ENCODE measurements at regions of chr19 and their contacts with region 1.

Region 1: DNA sequence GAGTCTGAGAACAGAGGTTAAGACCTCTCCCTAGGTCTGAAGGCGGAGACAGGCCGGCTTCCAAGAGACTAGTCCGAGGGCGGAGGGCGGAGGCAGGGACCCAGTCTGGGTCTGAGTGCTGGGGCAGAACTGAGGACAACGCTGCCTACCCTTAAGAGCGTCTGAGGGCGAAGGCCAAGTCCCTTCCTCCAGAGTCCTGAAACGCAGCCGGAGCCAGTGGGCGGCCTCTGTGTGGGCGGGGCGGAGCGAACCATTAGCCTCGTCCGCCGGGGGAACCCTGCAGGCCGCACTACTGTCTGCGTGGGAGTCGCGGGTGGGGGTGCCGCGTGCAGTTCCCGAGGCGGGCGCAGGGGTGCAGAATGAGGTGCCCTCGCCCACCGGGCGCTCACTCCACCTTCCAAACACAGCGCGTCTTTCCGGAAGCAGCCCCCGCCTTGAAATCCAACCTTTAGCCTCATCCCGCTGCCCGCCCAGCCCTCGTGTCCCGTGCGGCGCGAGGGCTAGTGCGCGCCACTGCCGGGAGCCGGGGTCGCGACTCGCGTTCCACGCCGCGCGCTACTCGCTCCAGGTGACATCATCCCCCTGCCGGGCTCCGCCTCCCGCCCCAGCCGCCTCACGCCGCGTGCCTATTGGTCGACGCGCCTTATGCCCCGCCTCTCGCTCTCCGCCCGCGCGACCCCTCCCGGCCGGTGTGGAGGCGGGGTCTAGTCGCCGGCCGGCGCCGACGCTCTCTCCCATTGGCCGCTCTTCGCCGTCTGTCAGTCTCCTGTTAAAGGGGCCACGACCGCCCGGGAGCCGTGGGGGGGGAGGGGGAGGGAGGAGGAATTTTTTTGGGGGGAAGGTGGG is at the start of gene C19orf73:
- DNase-seq: peak; percentile 80 to 96
- H3K4me3 ChIP-seq: peak within 1 kb of the TSS; percentile 74
- H3K27ac ChIP-seq: peak within 1 kb of the TSS; percentile 63
- H3K4me1 ChIP-seq: peaks cover 8% of the 10 kb centered on the region
- H3K27me3 ChIP-seq: peaks cover 13% of the 10 kb centered on the region
- CTCF ChIP-seq: no peak
- total RNA-seq, gene C19orf73: 1.5 and 3.0 TPM in 2 replicates

Region 2: DNA sequence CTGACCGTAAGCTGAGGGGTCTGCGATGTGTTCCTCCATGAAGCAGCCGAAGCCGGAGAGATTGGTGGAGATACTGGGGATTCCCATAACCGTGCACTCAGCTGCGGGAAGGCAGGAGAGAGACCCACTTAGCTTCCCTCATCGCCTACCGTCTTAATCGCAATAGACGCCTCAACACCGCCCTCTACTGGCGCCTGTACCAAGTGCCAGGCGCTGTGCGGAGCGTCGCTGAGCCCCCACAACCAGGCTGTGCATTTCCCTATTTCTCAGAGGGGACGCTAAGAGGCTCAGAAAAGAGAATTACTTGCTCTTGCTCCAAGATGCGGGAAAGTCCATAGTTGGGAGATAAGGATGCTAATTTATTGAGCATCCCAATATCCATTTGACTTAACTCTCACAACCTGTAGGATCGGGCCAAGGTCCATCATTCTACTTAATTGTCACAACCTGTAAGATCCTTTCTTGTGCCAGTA is 147.8 kb before region 1 on chr19:
- CTCF ChIA-PET with region 1: interaction called, 11 read pairs
- POLR2A ChIA-PET with region 1: no interaction called
- intact Hi-C with region 1: no loop called
- DNase-seq: peak; percentile 45 to 64
- H3K4me3 ChIP-seq: no peak overlapping the region
- H3K27ac ChIP-seq: no peak overlapping the region
- H3K4me1 ChIP-seq: peaks cover 12% of the 10 kb centered on the region
- H3K27me3 ChIP-seq: no peaks in the 10 kb centered on the region
- CTCF ChIP-seq: peak; percentile 97

Region 3: DNA sequence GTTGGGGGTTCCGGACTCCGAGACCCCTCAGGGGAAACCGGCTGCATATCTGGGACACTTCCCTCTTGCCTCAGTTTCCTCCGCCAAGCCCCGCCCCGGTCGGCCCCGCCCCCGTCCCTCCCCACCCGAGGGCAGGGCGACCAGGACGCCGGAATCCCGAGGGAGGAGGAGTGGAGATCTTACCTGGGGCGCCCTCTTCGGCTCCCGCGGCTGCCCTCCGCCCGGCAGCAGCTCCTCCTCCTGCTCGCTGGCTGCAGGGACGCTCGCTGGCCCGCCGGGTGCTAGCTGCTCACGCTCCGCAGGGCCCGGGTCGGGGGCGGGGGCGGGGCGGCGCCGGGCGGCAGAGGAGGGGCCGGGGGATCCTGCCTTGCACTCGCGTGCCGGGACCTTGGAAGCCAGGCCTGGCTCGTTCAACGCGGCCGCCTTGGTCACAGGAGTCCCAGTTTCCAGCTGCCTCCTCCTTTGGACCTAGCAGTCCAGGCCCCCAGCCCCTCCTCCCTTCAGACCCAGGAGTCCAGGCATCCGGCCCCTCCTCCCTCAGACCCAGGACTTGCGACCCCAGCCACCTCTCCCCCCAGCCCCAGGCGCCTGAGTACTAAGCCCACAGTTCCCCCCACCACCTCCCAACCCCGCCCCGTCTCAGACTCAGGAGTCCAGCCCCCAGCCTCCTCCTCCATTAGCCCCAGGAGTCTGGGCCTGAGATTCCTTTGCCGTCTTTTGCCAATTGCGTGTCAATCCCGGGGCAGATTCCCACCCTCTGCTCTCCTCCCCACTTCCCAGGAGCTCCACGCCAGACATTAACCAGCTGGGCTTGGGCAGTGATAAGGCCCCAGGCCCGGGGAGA is 53.8 kb before region 1 on chr19 and contains the start of gene NTF4:
- CTCF ChIA-PET with region 1: no interaction called
- POLR2A ChIA-PET with region 1: interaction called, 14 read pairs
- intact Hi-C with region 1: no loop called
- DNase-seq: peak in 1 of 2 experiments; percentile 75
- H3K4me3 ChIP-seq: peak within 1 kb of the TSS; percentile 35; the same call in 1 of the 2 replicates
- H3K27ac ChIP-seq: no peak within 1 kb of the TSS
- H3K4me1 ChIP-seq: peaks cover 11% of the 10 kb centered on the region; the same call in 1 of the 2 replicates
- H3K27me3 ChIP-seq: peaks cover 17% of the 10 kb centered on the region
- CTCF ChIP-seq: no peak
- total RNA-seq, gene NTF4: 14.0 and 18.6 TPM in 2 replicates

Region 4: DNA sequence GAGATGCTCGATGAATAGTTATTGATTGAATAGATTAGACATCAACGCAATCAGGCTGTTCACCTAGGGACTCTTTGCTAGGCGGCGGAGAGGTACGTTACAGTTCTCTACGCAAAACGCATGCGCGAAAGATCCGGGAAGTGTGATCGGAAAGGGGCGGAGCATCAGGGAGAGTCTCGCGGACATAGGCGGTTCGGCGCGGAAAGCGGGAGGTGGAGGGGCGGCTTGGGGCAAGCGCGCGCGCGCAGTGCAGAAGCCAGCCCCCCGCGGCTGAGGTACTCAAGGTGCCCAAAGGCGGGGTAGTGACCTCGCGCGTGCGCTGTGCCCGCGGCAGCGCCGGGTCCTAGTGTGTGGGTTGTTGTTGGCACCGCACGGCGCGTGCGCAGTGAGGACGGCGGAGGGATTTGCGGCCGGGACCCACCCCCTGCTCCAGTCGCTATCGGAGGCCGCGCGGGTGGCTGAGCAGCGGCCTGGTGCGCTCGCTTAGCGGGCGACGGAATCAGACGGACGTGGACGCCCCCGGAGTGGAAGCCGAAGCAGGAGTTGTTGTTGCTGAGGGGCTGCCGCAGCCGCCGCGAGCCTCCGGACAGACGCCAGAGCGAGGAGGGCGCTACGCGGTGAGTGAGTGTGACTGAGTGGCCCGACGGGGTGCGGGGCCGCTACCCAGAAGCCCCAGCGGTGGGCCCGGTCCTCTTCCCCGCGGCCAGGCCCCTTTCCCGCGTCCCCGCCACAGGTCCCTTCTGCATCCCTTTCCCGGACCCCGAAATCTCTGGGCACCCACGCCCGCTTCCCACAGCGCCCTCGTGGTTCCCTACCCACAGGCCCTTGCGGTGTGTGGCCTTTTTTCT is 33.5 kb before region 1 on chr19 and contains the start of gene SNRNP70:
- CTCF ChIA-PET with region 1: no interaction called
- POLR2A ChIA-PET with region 1: interaction called, 15 read pairs
- intact Hi-C with region 1: no loop called
- DNase-seq: peak; percentile 97 to 100
- H3K4me3 ChIP-seq: peak within 1 kb of the TSS; percentile 77
- H3K27ac ChIP-seq: peak within 1 kb of the TSS; percentile 41
- H3K4me1 ChIP-seq: peaks cover 15% of the 10 kb centered on the region
- H3K27me3 ChIP-seq: no peaks in the 10 kb centered on the region
- CTCF ChIP-seq: 0 out of 2 replicates have a peak, but pooled peaks have one; percentile 27
- total RNA-seq, gene SNRNP70: 151 and 199 TPM in 2 replicates

Region 5: DNA sequence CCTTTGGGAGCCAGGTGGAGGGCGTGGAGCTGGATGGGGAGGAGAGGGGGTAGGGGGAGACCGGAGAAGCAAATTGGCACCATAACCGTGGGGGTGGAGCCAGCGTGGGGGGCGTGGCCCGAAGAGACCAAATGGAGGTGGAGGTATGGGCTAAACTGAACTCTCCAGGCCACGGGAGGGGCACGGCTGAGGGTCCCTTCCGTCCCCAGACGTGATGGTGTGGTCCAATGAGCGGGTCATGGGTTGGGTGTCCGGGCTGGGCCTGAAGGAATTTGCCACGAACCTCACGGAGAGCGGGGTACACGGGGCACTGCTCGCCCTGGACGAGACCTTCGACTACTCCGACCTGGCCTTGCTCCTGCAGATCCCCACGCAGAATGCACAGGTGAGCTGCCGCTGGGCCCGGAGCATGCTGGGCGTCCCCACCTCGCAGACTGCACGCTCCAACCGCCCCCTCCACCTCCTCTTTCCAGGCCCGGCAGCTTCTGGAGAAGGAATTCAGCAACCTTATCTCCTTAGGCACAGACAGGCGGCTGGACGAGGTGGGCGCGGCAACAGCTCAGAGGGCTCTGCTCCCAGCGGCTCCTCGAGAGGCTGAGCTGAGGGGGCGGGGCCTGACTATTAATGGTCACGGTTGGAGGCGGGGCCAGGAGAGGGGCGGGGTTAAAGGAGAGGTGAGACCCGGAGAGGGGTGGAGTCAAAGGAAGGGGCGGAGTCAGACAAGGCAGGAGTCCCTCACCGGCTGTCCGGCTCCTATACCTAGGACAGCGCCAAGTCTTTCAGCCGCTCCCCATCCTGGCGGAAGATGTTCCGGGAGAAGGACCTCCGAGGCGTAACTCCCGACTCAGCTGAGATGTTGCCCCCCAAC is 30.2 kb after region 1 on chr19:
- CTCF ChIA-PET with region 1: no interaction called
- POLR2A ChIA-PET with region 1: no interaction called
- intact Hi-C with region 1: loop called (anchors 2 kb)
- DNase-seq: peak; percentile 95 to 100
- H3K4me3 ChIP-seq: peak overlapping the region; percentile 88
- H3K27ac ChIP-seq: 0 out of 2 replicates have a peak overlapping the region, but pooled peaks have one; percentile 37
- H3K4me1 ChIP-seq: peaks cover 16% of the 10 kb centered on the region; the same call in 1 of the 2 replicates
- H3K27me3 ChIP-seq: no peaks in the 10 kb centered on the region
- CTCF ChIP-seq: no peak

Region 6: DNA sequence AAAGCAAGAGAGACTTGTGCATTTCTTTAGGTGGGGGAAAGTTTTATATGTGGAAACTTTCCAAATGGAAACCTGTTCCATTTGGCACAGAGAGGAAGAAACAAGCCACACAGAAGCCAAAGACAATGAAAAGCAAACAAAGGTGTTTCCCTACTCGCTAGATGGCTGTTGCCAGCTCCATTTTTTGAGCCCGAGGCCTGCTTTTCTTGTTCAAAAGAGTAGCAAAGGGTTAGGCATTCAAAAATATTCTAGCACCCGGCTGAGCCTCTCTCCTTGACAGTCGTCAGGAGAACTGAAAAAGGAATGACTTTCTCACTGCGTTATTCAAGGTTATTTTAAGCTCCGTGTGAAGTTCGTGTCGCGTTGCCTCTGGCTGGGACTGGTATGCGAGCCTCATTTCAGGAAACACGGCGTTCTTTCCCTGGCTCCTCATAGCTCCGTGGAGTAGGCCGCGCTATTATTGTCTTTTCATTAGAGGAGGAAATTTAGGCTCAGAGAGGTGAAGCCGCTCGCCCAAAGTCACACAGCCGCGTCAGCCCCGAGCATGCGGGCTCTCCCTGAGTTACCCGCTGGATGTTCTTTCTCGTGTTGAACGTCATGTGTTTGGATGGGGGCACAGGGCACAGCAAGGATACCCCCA is 46.4 kb after region 1 on chr19:
- CTCF ChIA-PET with region 1: interaction called, 4 read pairs
- POLR2A ChIA-PET with region 1: no interaction called
- intact Hi-C with region 1: loop called (anchors 2 kb)
- DNase-seq: peak; percentile 49 to 81
- H3K4me3 ChIP-seq: no peak overlapping the region
- H3K27ac ChIP-seq: peak overlapping the region; percentile 17; the same call in 1 of the 2 replicates
- H3K4me1 ChIP-seq: peaks cover 13% of the 10 kb centered on the region
- H3K27me3 ChIP-seq: no peaks in the 10 kb centered on the region
- CTCF ChIP-seq: no peak

Region 7: GRCh38 chr19:49200238-49200862 is 81.6 kb after region 1 on chr19:
- CTCF ChIA-PET with region 1: interaction called, 11 read pairs
- POLR2A ChIA-PET with region 1: no interaction called
- intact Hi-C with region 1: no loop called
- DNase-seq: no peak
- H3K4me3 ChIP-seq: no peak overlapping the region
- H3K27ac ChIP-seq: no peak overlapping the region
- H3K4me1 ChIP-seq: peaks cover 38% of the 10 kb centered on the region
- H3K27me3 ChIP-seq: no peaks in the 10 kb centered on the region
- CTCF ChIP-seq: no peak